Ascending aorta (tissue), 2 donors: ENCODE measurements at regions of chr1 and their contacts with region 1.

Region 1: GRCh38 chr1:179121159-179121938 is 39.5 kb downstream of the TOR3A start:
- DNase-seq: no peak
- H3K4me3 ChIP-seq: no peak overlapping the region
- H3K27ac ChIP-seq: peak overlapping the region in 1 of 2 donors; percentile 20
- H3K4me1 ChIP-seq: peaks cover 0 to 6% of the 10 kb centered on the region in 2 donors
- H3K27me3 ChIP-seq: no peaks in the 10 kb centered on the region
- CTCF ChIP-seq: peak; percentile 34 to 66 (median 44)

Region 2: DNA sequence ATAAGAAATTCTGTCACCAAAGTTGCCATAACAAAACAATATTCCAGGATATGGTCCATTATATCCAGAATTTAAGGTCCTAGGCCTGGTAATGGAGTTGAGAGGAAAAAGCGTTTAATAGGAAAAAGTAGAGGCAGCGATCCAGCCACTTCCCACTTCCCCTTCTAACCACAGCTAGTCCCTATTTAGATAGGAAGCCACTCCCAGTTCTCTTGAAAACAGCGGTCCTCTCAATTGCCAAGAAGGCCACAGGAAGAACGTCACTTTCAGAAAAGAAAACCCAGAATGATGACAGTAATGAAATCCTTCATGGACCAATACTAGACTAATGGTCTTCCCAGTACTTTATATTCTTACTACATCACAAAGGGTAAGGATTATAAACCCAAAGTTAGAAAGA is 69.5 kb after region 1 on chr1:
- intact Hi-C with region 1: loop called (anchors 1 kb)
- DNase-seq: no peak
- H3K4me3 ChIP-seq: no peak overlapping the region
- H3K27ac ChIP-seq: peak overlapping the region in 1 of 2 donors; percentile 4
- H3K4me1 ChIP-seq: no peaks in the 10 kb centered on the region
- H3K27me3 ChIP-seq: no peaks in the 10 kb centered on the region
- CTCF ChIP-seq: no peak

Region 3: DNA sequence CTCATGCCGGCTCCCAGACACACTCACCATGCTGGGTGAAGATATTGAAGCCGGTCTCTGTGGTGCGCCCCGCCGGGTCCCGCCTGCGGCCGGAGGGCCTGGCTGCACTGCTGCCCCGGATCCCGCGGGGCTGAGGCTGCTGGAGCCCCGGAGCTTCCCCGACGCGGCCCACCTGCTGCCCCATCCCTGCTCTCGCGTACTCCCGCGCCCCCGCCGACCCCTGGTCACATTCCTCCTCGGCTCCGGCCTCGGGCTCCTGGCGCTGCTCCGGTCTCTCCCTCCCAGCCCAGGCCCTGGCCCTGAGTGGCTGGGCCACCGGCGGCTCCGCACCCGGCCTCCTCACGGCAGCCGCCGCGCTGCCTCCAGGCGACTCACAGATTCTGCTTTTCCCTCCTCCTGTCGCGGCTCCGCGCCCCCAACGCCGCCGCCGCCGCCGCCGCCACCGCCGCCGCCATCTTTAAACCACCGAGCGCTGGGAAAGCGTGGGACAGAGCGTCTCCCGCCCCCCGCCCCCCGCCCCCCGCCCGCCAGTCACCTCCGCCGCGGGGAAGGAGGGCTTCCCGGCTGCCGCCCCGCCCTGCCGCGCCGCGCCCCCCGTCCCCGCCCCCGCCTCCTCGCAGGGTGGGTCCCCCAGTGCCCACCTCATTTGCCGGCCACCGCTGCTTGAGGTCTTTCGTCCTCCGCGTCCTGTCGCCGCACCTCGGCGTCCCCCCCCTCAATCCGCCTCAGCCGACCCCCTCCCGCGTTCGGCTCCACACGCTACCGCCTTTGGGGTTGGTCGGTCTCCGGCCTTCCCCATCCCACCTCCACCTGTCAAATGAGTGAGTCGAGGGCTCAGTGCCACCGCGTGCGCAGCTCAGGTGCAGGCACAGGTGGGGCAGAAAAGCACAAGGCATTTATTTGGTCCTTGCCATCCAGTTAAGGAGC is 108.1 kb after region 1 on chr1 and contains the start of gene ABL2:
- intact Hi-C with region 1: loop called (anchors 5 kb)
- DNase-seq: peak in 1 of 2 donors; percentile 69
- H3K4me3 ChIP-seq: peak within 1 kb of the TSS; percentile 95 to 100
- H3K27ac ChIP-seq: peak within 1 kb of the TSS; percentile 87 to 95
- H3K4me1 ChIP-seq: peaks cover 0 to 20% of the 10 kb centered on the region in 2 donors
- H3K27me3 ChIP-seq: no peaks in the 10 kb centered on the region
- CTCF ChIP-seq: no peak
- total RNA-seq, gene ABL2: 23.9 TPM

Region 4: GRCh38 chr1:179365320-179366092 is 244.2 kb after region 1 on chr1 and contains the start of gene AXDND1:
- intact Hi-C with region 1: loop called (anchors 2 kb)
- DNase-seq: peak; percentile 54 to 93
- H3K4me3 ChIP-seq: peak within 1 kb of the TSS; percentile 62 to 70
- H3K27ac ChIP-seq: peak within 1 kb of the TSS; percentile 84 to 95
- H3K4me1 ChIP-seq: peaks cover 0 to 6% of the 10 kb centered on the region in 2 donors
- H3K27me3 ChIP-seq: no peaks in the 10 kb centered on the region
- CTCF ChIP-seq: no peak
- total RNA-seq, gene AXDND1: not detected